ENCODE measurements at regions of chr15 and their contacts with region 1.

Region 1: DNA sequence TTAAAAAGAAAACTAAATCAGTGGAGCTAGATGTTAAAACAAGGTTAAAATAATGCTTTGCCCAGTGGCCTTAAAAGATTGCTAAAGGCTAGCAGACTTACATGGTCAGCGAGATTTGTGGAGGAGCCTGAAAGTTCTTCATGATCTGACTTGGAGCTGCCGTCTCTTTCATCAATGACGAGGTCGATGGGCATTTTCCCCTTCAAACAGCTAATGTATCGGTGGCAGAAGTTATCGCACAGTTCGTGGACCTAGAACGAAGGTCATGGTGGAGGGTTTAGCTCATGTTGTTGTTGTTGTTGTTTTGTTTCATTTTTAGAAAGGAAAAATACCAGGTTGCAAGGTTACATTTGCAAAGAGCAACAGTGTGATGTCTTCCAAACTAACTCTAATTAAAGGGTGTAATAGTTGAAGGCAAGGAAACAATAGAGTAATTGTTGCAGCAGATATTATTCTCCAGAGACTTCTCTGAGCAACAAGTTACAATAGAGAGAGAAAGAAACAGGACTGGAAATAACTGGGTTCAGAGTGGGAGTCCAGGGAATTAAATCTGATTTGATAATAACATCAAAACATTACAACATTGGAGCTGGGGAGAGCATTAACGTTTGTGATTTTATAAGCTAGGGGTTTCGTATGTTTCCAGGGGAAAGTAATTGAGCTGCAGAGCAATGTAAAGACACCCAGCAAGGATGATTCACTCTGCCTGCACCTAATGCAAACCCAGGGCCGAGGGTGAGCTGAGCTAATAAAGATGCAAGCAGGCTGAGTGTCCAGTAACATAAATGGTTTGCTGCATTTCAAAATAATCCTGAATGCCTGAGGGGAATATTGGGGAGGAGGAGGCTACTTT is 6.6 kb downstream of the MEIS2 start:
- DNase-seq: no peak
- ATAC-seq: no peak
- H3K4me3 ChIP-seq: peak overlapping the region in 9 of 10 donors; percentile 1 to 86 (median 76)
- H3K27ac ChIP-seq: peak overlapping the region in 9 of 10 donors; percentile 91 to 99 (median 96)
- H3K4me1 ChIP-seq: peaks cover 0 to 65% (median 35%) of the 10 kb centered on the region in 9 donors
- H3K27me3 ChIP-seq: peaks cover 0 to 59% (median 8%) of the 10 kb centered on the region in 7 donors
- CTCF ChIP-seq: no peak

Region 2: GRCh38 chr15:36996538-36997181 is 97.0 kb before region 1 on chr15:
- intact Hi-C with region 1: loop called in 1 of 10 experiments (anchors 5 kb)
- DNase-seq: no peak
- ATAC-seq: peak in 7 of 8 donors; percentile 26 to 60 (median 46)
- H3K4me3 ChIP-seq: no peak overlapping the region
- H3K27ac ChIP-seq: peak overlapping the region; percentile 10 to 77 (median 53)
- H3K4me1 ChIP-seq: peaks cover 0 to 42% (median 25%) of the 10 kb centered on the region in 9 donors
- H3K27me3 ChIP-seq: no peaks in the 10 kb centered on the region
- CTCF ChIP-seq: no peak

Region 3: DNA sequence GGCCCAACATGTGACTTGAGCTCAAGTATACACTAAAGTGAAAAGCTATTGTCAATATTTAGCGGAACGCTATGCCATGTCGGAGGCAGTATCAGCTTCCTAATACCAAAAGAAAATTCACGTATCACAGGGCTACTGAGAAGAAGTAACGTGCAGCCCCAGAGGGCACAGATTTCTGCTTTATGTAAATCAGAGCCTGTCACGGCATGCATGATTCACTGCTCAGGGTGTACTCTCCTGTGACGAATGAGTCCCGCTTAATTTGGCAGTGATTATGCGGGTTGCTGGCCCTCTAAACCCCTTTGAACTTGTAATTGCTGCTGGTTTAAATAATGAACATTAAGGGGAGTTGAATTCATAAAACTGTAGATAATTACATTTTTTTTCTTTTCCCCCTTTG is 78.7 kb before region 1 on chr15:
- intact Hi-C with region 1: loop called in 4 of 10 experiments (anchors 5 to 10 kb)
- DNase-seq: peak in 1 of 2 donors; percentile 21
- ATAC-seq: peak; percentile 36 to 86 (median 79)
- H3K4me3 ChIP-seq: no peak overlapping the region
- H3K27ac ChIP-seq: peak overlapping the region in 9 of 10 donors; percentile 5 to 89 (median 78)
- H3K4me1 ChIP-seq: peaks cover 5 to 70% (median 37%) of the 10 kb centered on the region in 9 donors
- H3K27me3 ChIP-seq: no peaks in the 10 kb centered on the region
- CTCF ChIP-seq: no peak

Region 4: GRCh38 chr15:37059086-37059485 is 34.6 kb before region 1 on chr15:
- intact Hi-C with region 1: loop called in 1 of 10 experiments (anchors 5 kb)
- DNase-seq: no peak
- ATAC-seq: peak in 6 of 8 donors; percentile 26 to 53 (median 44)
- H3K4me3 ChIP-seq: no peak overlapping the region
- H3K27ac ChIP-seq: peak overlapping the region in 8 of 10 donors; percentile 17 to 86 (median 76)
- H3K4me1 ChIP-seq: peaks cover 0 to 54% (median 41%) of the 10 kb centered on the region in 9 donors
- H3K27me3 ChIP-seq: no peaks in the 10 kb centered on the region
- CTCF ChIP-seq: no peak

Region 5: DNA sequence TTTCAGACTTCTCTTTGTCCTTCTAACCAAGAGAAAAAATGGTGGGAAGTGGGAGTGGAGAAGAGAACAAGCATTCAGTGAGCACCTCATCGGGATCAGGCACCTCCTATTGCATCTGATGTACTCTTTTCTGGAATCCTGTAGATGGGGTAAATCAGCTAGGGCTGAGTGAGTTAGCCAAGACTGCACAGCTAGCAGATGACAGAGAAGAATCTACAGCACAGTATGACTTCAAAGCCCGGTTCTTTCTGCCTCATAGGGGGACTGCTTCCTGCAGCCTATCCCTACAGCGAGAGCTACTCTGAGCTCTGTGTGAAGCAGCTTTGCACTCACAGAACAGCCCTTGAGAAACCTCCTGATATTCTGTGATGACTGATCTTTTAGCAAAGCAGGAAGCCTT is 281.8 kb after region 1 on chr15:
- intact Hi-C with region 1: no loop called
- DNase-seq: no peak
- ATAC-seq: no peak
- H3K4me3 ChIP-seq: no peak overlapping the region
- H3K27ac ChIP-seq: no peak overlapping the region
- H3K4me1 ChIP-seq: no peaks in the 10 kb centered on the region
- H3K27me3 ChIP-seq: no peaks in the 10 kb centered on the region
- CTCF ChIP-seq: no peak

Measured in heart right ventricle (tissue), 16 donors.